ENCODE measurements at regions of chr1 and their contacts with region 1.

Region 1: GRCh38 chr1:45490626-45491486 is at the start of gene TESK2:
- DNase-seq: peak; percentile 100
- ATAC-seq: peak; percentile 94
- H3K4me3 ChIP-seq: peak within 1 kb of the TSS; percentile 73 to 75
- H3K27ac ChIP-seq: peak within 1 kb of the TSS; percentile 19; the same call in 1 of the 2 replicates
- H3K4me1 ChIP-seq: peaks cover 12 to 18% of the 10 kb centered on the region in 2 experiments
- H3K27me3 ChIP-seq: no peaks in the 10 kb centered on the region
- CTCF ChIP-seq: no peak
- POLR2A ChIP-seq: no peak
- RAD21 ChIP-seq: 0 out of 2 replicates have a peak, but pooled peaks have one; percentile 7
- total RNA-seq, gene TESK2: 5.0 TPM

Region 2: DNA sequence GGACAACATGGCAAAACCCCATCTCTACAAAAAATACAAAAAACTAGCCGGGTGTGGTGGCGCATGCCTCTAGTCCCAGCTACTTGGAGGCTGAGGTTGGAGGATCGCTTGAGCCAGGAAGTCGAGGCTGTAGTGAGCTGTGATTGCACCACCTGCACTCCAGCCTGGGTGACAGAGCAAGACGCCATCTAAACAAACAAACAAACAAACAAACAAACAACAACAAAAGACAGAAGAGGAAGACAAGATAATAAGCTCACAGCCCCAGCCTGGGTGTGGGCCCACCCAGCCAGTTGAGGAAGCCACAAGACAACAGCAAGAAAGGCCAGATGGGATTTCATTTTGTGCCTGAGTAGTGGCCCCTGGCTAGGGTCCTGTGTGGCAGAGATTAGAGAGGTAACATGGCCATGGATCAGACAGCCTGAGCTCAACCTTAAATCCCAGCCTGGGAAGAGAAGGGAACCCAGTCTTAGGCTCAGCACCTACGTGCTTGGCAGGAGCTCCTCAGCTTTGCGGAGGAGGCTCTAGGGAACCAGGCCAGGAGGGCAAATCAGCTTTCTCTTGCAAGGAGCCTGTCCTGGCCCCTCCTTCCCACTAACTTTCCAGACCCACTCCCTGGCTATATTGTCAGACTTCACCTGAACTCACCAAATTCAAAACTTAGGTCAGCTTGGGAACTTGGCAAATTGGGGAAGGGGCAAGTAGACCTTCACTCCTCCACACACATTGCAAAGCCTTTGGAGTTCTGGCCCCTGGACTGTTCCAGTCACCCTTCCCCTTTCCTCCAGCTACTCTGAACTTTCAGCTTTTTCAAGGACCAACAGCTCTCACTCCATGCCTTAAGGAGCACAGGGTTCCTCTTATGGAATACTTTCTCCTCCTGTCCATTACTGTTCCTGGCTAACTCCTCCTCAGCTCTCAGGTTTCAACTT is 697.8 kb before region 1 on chr1:
- CTCF ChIA-PET with region 1: interaction called, 3 read pairs
- POLR2A ChIA-PET with region 1: no interaction called
- RAD21 ChIA-PET with region 1: no interaction called
- intact Hi-C with region 1: loop called (anchors 5 kb)
- DNase-seq: no peak
- ATAC-seq: no peak
- H3K4me3 ChIP-seq: peak overlapping the region in 1 of 2 experiments; percentile 8; a peak in 1 of 4 replicates
- H3K27ac ChIP-seq: peak overlapping the region; percentile 58
- H3K4me1 ChIP-seq: peaks cover 14 to 30% of the 10 kb centered on the region in 2 experiments; a peak in 3 of 4 replicates
- H3K27me3 ChIP-seq: no peaks in the 10 kb centered on the region
- CTCF ChIP-seq: no peak
- POLR2A ChIP-seq: no peak
- RAD21 ChIP-seq: no peak

Region 3: GRCh38 chr1:45018599-45019230 is 472.1 kb before region 1 on chr1:
- CTCF ChIA-PET with region 1: interaction called, 58 read pairs
- POLR2A ChIA-PET with region 1: interaction called, 3 read pairs
- RAD21 ChIA-PET with region 1: interaction called in 1 of 2 experiments, 10 read pairs
- intact Hi-C with region 1: loop called (anchors 1 kb)
- DNase-seq: peak; percentile 41
- ATAC-seq: peak; percentile 96
- H3K4me3 ChIP-seq: no peak overlapping the region
- H3K27ac ChIP-seq: no peak overlapping the region
- H3K4me1 ChIP-seq: no peaks in the 10 kb centered on the region
- H3K27me3 ChIP-seq: no peaks in the 10 kb centered on the region
- CTCF ChIP-seq: peak; percentile 83 to 93 (median 84)
- POLR2A ChIP-seq: no peak
- RAD21 ChIP-seq: peak; percentile 86

Region 4: GRCh38 chr1:45339789-45340570 is 150.9 kb before region 1 on chr1 and contains the starts of genes MUTYH and TOE1:
- CTCF ChIA-PET with region 1: interaction called, 5 read pairs
- POLR2A ChIA-PET with region 1: interaction called, 13 read pairs
- RAD21 ChIA-PET with region 1: interaction called in 1 of 2 experiments, 5 read pairs
- intact Hi-C with region 1: no loop called
- DNase-seq: peak; percentile 79
- ATAC-seq: peak; percentile 90
- H3K4me3 ChIP-seq: peak within 1 kb of the TSS; percentile 93 to 94
- H3K27ac ChIP-seq: peak within 1 kb of the TSS; percentile 82
- H3K4me1 ChIP-seq: peaks cover 21 to 50% of the 10 kb centered on the region in 2 experiments
- H3K27me3 ChIP-seq: no peaks in the 10 kb centered on the region
- CTCF ChIP-seq: no peak
- POLR2A ChIP-seq: peak; percentile 46
- RAD21 ChIP-seq: no peak
- total RNA-seq, gene MUTYH: 44.8 TPM
- total RNA-seq, gene TOE1: 11.5 TPM

Region 5: DNA sequence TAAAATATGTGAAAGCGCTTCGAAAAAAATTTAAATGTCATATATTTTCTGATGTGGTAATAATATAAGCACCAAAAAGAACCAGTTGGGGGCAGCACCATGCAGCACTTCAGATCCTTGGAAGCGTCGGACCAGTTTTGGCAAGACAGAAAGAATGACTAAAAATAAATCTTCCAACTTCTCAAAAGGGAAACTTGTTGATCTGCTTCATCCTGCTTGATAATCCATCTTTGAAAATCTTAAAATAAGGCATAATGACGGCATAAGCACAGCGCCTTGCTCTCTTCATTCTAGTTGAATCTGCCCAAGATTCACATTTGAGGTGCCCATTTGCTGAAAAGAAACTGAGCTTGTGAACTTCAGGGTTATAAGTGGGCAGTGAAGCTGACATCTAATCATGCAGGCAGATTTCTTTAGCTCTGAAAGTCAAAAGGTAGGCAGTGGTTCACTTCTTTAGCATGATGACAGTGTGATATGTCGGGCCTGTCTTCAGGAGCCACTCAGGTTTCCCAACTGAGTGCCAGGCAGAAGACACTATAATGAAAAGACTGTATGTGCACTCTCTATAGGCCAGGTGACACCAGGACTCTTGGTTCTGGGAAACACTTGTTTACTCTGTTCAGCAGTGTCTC is 130.9 kb before region 1 on chr1:
- CTCF ChIA-PET with region 1: interaction called, 45 read pairs
- POLR2A ChIA-PET with region 1: interaction called, 3 read pairs
- RAD21 ChIA-PET with region 1: interaction called, 3 to 7 read pairs
- intact Hi-C with region 1: loop called (anchors 1 kb)
- DNase-seq: no peak
- ATAC-seq: peak; percentile 70
- H3K4me3 ChIP-seq: no peak overlapping the region
- H3K27ac ChIP-seq: no peak overlapping the region
- H3K4me1 ChIP-seq: peaks cover 13 to 20% of the 10 kb centered on the region in 2 experiments
- H3K27me3 ChIP-seq: no peaks in the 10 kb centered on the region
- CTCF ChIP-seq: peak; percentile 60 to 76 (median 64)
- POLR2A ChIP-seq: no peak
- RAD21 ChIP-seq: peak; percentile 85